GM18951 (cell line): ENCODE measurements at regions of chr15 and their contacts with region 1.

Region 1: GRCh38 chr15:85831415-85832113 is 36.8 kb upstream of the KLHL25 start:
- POLR2A ChIP-seq: no peak

Region 2: GRCh38 chr15:85421116-85421925 is 410.2 kb before region 1 on chr15:
- in situ Hi-C with region 1: no loop called
- POLR2A ChIP-seq: no peak

Region 3: GRCh38 chr15:85742186-85742821 is 89.3 kb before region 1 on chr15:
- in situ Hi-C with region 1: loop called (anchors 10 kb)
- POLR2A ChIP-seq: no peak